GM10248 (cell line): ENCODE measurements at regions of chr6 and their contacts with region 1.

Region 1: DNA sequence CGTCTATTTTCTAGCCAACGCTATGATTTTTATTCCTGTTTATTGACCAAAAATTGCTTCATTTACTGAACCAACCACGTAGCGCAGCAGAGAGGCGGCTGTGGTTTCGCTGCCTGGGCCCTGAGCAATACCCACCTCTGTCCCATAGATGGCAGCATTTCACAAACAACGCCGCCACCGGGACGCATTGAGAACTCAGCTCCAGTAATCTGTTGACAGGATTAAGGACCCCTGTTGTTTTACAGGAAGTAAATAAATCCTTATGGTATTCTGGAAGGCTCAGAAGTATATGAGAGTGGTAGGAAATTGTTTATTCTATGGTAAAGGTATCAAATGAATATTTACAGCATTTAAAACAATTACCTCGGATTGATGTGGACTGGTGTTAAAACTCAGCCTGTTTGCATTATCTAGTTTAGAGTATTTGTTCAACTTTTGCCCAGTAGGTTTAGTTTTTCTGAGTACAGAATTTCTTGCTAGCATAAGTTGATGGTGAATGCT is 547.9 kb upstream of the SLC35B3 start:
- DNase-seq: peak; percentile 49
- CTCF ChIP-seq: peak; percentile 92

Region 2: DNA sequence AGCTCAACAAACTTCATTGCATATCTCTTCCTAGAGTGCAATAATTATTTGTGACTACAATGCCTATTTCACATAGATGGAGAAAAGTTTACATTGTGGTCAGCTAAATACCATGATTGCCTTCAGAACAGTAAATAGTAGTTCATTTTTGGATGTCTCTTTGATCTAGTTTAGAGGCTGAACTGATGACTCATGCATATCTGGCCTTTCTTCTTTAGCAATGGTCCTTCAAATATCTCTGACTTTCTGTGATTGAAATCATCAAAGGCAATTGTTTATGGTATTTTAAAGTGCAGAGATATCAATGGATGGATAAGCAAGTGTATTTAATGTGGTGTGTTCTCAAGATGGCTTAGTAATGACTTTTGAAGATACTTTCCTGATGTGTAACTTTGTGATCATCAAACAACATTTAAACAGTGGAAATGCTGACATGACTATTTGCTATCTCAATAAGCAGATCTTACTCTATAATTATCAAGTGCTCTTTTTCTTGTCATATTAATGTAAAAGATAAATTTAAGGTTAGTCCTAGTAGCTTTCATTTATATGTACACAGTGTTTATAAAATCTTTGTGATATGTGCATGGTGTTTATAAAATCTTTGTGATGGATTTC is 24.2 kb before region 1 on chr6:
- CTCF ChIA-PET with region 1: no interaction called
- POLR2A ChIA-PET with region 1: no interaction called
- DNase-seq: no peak
- CTCF ChIP-seq: no peak

Region 3: GRCh38 chr6:8969747-8970146 is 13.5 kb before region 1 on chr6:
- CTCF ChIA-PET with region 1: interaction called, 18 read pairs
- POLR2A ChIA-PET with region 1: no interaction called
- DNase-seq: no peak
- CTCF ChIP-seq: no peak

Region 4: DNA sequence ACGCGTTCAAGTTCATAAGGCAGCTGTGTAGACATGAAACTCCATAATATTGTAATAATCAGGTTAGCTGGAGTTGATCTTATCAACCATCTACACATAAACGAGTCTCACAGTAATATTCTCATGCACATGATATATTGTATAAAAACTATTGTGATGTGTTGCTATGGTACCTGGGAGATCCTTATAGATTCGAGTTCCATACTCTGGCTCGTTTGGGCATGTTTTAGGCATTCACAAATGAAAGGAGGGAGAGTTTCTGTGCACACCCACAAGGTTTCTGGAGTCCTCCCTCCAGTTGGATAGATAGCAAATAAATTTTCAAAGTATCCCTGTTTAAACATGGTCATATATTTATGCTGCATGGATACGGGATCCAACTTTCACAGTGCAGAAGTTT is 19.6 kb after region 1 on chr6:
- CTCF ChIA-PET with region 1: interaction called, 12 read pairs
- POLR2A ChIA-PET with region 1: no interaction called
- DNase-seq: no peak
- CTCF ChIP-seq: no peak

Region 5: DNA sequence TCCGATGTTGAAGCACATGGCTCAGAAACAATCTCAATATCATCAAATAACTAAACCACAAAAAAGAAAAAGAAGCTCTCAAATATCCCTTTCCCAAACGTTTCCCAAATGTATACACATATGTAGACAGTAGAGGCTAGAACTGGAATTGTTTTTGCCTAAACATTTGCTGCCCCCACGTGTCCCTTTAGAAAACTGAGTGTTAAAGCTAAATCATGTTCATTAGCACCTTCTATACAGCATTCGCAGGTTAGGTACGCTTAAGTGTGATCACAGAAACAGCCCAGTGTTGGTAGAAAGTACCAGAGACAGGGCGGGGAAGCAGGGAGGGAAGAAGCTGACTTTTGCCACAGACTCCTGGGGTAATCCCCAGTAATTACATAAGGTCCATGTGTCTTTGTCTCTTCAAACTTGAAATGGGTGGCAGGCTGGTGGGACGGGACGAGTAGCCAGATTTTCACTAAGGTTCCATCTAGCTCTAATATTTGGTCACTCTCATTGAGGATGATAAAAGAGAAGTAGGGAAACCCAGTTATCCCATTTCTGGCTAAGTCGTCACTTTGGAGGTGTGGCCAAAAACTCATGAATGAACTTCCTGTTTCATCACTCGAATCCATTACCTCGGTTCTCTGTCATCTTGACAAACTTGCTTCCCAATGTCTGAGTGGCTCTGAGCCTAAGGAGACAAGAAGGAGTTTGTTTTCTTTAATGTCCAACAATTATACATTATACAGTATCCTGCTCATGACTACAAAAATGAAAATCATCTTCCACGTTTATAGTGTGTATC is 1446.6 kb after region 1 on chr6:
- CTCF ChIA-PET with region 1: interaction called, 35 read pairs
- POLR2A ChIA-PET with region 1: no interaction called
- DNase-seq: no peak
- CTCF ChIP-seq: peak; percentile 70

Region 6: DNA sequence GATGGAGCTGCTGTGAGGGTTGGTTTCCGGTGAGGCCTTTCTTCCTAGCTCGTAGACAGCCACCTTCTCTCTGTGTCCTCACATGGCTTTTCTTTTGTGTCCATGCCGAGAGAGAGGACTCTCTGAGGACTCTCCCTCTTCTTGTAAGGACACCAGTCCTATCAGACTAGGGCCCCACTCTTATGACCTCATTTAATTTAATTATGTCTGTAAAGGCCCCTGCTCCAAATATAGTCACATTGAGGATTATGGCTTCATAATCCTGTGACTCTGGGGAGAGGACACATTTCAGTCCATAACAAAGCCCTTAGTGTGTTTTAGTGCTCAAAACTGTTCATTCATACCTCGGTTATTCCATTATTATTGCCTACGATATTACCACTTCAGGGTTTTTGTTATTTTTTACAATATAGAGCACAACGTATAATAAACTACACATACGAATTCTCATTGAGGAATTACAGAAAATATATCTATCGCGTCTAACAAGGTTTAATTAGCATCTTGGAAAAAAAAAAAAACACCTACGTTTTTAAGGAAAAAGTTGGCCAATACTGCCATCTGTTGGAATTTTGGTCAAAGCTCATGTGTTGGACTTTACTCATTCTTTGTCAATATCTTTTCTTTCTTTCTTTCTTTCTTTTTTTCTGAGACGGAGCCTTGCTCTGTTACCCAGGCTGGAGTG is 1451.6 kb after region 1 on chr6:
- CTCF ChIA-PET with region 1: interaction called, 35 read pairs
- POLR2A ChIA-PET with region 1: no interaction called
- DNase-seq: no peak
- CTCF ChIP-seq: peak; percentile 47